GM13977 (cell line): ENCODE measurements at regions of chr5 and their contacts with region 1.

Region 1: GRCh38 chr5:141623186-141623585 is 4.4 kb upstream of the DIAPH1 start:
- DNase-seq: peak; percentile 53
- CTCF ChIP-seq: no peak

Region 2: GRCh38 chr5:141585594-141585993 is 37.6 kb before region 1 on chr5:
- in situ Hi-C with region 1: loop called (anchors 5 kb)
- DNase-seq: no peak
- CTCF ChIP-seq: no peak